ENCODE measurements at regions of chr13 and their contacts with region 1.

Region 1: GRCh38 chr13:108257248-108257647 is 12.3 kb upstream of the TNFSF13B start:
- DNase-seq: no peak
- H3K4me3 ChIP-seq: no peak overlapping the region
- H3K4me3 Mint-ChIP-seq: no peak overlapping the region
- H3K27ac ChIP-seq: no peak overlapping the region
- H3K27ac Mint-ChIP-seq: peak overlapping the region in 1 of 7 donors; percentile 27
- H3K4me1 ChIP-seq: no peaks in the 10 kb centered on the region
- H3K4me1 Mint-ChIP-seq: peaks cover 0 to 5% (median 0%) of the 10 kb centered on the region in 4 donors
- H3K27me3 ChIP-seq: no peaks in the 10 kb centered on the region
- H3K27me3 Mint-ChIP-seq: no peaks in the 10 kb centered on the region

Region 2: GRCh38 chr13:108795841-108796240 is 538.6 kb after region 1 on chr13:
- CTCF ChIA-PET with region 1: no interaction called
- POLR2A ChIA-PET with region 1: no interaction called
- intact Hi-C with region 1: loop called (anchors 2 kb)
- DNase-seq: no peak
- H3K4me3 ChIP-seq: no peak overlapping the region
- H3K4me3 Mint-ChIP-seq: no peak overlapping the region
- H3K27ac ChIP-seq: no peak overlapping the region
- H3K27ac Mint-ChIP-seq: no peak overlapping the region
- H3K4me1 ChIP-seq: no peaks in the 10 kb centered on the region
- H3K4me1 Mint-ChIP-seq: no peaks in the 10 kb centered on the region
- H3K27me3 ChIP-seq: no peaks in the 10 kb centered on the region
- H3K27me3 Mint-ChIP-seq: no peaks in the 10 kb centered on the region